Heart left ventricle (tissue), 16 donors: ENCODE measurements at regions of chr7 and their contacts with region 1.

Region 1: DNA sequence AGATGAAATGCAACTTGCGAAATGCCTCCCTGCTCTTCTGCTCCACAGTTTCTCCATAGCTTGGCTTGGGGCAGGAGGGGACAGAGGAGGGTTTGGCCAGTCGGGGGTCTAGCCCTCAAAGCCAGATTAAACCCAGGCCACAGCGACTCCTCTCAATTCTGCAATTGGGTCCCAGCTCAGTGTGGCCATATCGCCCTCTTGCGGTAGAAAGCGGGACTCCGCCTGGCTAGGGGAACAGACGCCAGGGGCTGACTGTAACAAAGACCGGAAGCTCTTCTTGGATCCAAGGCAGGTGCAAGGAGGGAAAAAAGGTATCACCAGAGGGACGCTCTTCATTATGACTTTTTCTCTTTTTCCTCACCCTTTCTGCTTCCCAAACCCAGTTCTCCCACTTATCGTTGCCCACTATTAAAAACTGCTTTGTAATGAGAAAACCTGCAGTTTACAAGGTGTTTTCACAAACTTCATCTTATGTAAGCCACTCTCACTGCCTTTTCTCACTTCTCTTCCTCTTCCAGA is 36.6 kb upstream of the TNPO3 start:
- DNase-seq: peak; percentile 65 to 86 (median 73)
- ATAC-seq: peak; percentile 74 to 86 (median 80)
- H3K4me3 ChIP-seq: no peak overlapping the region
- H3K27ac ChIP-seq: no peak overlapping the region
- H3K4me1 ChIP-seq: peaks cover 0 to 6% (median 0%) of the 10 kb centered on the region in 12 donors
- H3K27me3 ChIP-seq: no peaks in the 10 kb centered on the region
- CTCF ChIP-seq: peak; percentile 89 to 98 (median 95)
- POLR2A ChIP-seq: no peak

Region 2: DNA sequence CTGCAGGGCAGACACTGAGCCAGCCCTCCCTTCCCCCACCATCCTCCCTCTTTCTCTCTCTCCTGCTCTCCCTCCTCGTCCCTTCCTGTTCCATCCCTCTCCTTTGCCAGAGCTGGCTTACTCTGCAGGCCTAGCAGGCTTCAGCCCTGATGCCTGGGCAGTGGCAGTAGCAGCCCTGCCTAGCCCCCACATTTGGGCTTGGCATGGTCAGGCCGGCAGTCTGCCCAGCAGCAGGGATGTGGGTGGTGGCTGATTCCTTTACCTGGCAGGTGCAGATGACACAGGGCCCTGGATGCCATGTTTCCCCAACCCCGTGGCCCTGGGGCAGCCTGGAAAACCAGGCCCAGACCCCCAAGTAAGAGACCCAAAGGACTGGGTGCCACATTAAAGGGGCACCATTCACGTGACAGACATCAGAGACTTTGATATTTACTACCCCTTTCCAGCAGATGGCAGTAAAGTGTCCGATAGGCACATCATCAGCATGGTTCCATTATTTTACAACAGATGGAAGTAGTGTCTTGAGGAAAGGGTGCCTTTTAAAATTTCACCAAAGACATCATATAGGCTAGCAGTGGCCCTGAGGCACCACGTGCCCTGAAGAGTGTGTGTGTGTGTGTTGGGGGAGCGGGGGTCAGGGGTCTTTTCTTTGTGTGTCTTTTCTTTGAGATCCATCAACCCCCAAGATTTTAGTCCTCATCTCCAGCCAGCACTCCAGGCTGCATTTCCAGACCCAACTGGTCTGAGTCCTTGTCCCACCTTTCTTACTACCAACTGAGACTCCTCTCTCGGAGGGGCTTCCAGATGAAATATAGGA is 187.0 kb before region 1 on chr7:
- intact Hi-C with region 1: loop called (anchors 1 to 5 kb)
- DNase-seq: peak in 1 of 5 donors; percentile 14
- ATAC-seq: peak in 3 of 4 donors; percentile 16 to 54 (median 44)
- H3K4me3 ChIP-seq: no peak overlapping the region
- H3K27ac ChIP-seq: no peak overlapping the region
- H3K4me1 ChIP-seq: peaks cover 0 to 6% (median 0%) of the 10 kb centered on the region in 12 donors
- H3K27me3 ChIP-seq: peaks cover 0 to 37% (median 11%) of the 10 kb centered on the region in 9 donors
- CTCF ChIP-seq: peak; percentile 34 to 65 (median 50)
- POLR2A ChIP-seq: no peak

Region 3: GRCh38 chr7:128909625-128910257 is 181.8 kb before region 1 on chr7:
- intact Hi-C with region 1: loop called (anchors 1 to 5 kb)
- DNase-seq: peak in 1 of 5 donors; percentile 38
- ATAC-seq: peak in 2 of 4 donors; percentile 15 to 23
- H3K4me3 ChIP-seq: peak overlapping the region in 11 of 12 donors; percentile 14 to 46 (median 32)
- H3K27ac ChIP-seq: no peak overlapping the region
- H3K4me1 ChIP-seq: peaks cover 0 to 15% (median 4%) of the 10 kb centered on the region in 12 donors
- H3K27me3 ChIP-seq: peaks cover 8 to 60% (median 32%) of the 10 kb centered on the region in 9 donors
- CTCF ChIP-seq: no peak
- POLR2A ChIP-seq: no peak

Region 4: DNA sequence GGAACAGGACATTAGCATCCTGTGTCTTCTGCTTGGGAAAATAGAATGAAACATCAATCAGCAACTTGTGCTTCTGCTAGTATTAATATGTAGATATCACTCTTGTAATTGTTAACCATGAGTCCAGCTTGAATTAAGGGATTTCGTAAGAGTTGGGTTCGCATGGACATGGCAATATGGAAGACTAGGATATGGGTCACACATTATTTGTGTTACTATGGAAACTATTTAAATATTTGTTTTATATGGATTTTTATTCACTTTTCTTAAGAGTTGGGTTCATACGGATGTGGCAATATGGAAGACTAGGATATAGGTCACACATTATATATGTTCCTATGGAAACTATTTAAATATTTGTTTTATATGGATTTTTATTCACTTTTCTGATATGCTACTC is 61.1 kb before region 1 on chr7:
- intact Hi-C with region 1: no loop called
- DNase-seq: no peak
- ATAC-seq: no peak
- H3K4me3 ChIP-seq: no peak overlapping the region
- H3K27ac ChIP-seq: no peak overlapping the region
- H3K4me1 ChIP-seq: peaks cover 0 to 5% (median 0%) of the 10 kb centered on the region in 12 donors
- H3K27me3 ChIP-seq: no peaks in the 10 kb centered on the region
- CTCF ChIP-seq: no peak
- POLR2A ChIP-seq: no peak

Region 5: GRCh38 chr7:129489491-129489890 is 397.9 kb after region 1 on chr7:
- intact Hi-C with region 1: no loop called
- DNase-seq: no peak
- ATAC-seq: no peak
- H3K4me3 ChIP-seq: no peak overlapping the region
- H3K27ac ChIP-seq: no peak overlapping the region
- H3K4me1 ChIP-seq: no peaks in the 10 kb centered on the region
- H3K27me3 ChIP-seq: no peaks in the 10 kb centered on the region
- CTCF ChIP-seq: no peak
- POLR2A ChIP-seq: no peak